Right cardiac atrium (tissue), 5 donors: ENCODE measurements at regions of chr12 and their contacts with region 1.

Region 1: GRCh38 chr12:94603434-94604365 is 46.7 kb downstream of the TMCC3 start:
- DNase-seq: peak; percentile 25 to 55 (median 50)
- ATAC-seq: peak in 1 of 2 donors; percentile 39
- H3K4me3 ChIP-seq: no peak overlapping the region
- H3K27ac ChIP-seq: no peak overlapping the region
- H3K4me1 ChIP-seq: peaks cover 2% of the 10 kb centered on the region
- H3K27me3 ChIP-seq: no peaks in the 10 kb centered on the region

Region 2: GRCh38 chr12:94753036-94753679 is 149.5 kb after region 1 on chr12:
- intact Hi-C with region 1: loop called in 1 of 4 experiments (anchors 10 kb)
- DNase-seq: peak in 2 of 3 donors; percentile 52 to 62
- ATAC-seq: peak; percentile 81
- H3K4me3 ChIP-seq: no peak overlapping the region
- H3K27ac ChIP-seq: no peak overlapping the region
- H3K4me1 ChIP-seq: no peaks in the 10 kb centered on the region
- H3K27me3 ChIP-seq: no peaks in the 10 kb centered on the region

Region 3: DNA sequence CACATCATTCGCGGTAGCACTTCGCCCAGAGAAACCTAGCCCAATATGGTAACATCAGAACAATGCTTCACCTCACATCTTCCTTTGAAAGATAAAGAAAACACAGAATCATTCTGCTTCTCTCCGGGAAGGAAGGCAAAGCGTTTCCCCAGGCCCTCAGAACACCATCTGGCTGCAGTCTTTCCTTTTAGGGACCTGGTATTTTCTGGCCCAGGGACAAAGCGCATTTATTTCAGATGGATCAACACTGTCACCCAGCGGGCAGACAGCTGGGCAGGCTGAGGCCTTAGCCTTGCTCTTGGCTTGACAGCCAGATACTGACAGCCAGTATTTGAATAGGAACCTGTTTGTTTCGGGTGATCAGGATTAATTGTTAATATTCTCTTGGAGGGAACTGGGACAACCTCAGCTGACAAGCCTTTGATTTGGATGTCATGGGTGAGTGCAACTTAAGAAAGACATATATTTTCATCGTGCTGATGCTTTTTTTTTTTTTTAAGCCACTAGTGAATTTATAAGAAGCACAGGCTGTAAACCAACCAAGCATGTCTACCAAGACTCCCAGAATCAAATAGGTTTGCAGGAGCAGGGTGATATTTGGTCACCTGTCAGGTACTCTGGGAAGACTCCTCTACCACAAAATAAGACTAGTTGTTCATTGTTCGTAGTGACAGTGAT is 732.8 kb after region 1 on chr12:
- intact Hi-C with region 1: no loop called
- DNase-seq: peak; percentile 60 to 84 (median 79)
- ATAC-seq: peak; percentile 93 to 94
- H3K4me3 ChIP-seq: no peak overlapping the region
- H3K27ac ChIP-seq: peak overlapping the region; percentile 17
- H3K4me1 ChIP-seq: no peaks in the 10 kb centered on the region
- H3K27me3 ChIP-seq: no peaks in the 10 kb centered on the region

Region 4: DNA sequence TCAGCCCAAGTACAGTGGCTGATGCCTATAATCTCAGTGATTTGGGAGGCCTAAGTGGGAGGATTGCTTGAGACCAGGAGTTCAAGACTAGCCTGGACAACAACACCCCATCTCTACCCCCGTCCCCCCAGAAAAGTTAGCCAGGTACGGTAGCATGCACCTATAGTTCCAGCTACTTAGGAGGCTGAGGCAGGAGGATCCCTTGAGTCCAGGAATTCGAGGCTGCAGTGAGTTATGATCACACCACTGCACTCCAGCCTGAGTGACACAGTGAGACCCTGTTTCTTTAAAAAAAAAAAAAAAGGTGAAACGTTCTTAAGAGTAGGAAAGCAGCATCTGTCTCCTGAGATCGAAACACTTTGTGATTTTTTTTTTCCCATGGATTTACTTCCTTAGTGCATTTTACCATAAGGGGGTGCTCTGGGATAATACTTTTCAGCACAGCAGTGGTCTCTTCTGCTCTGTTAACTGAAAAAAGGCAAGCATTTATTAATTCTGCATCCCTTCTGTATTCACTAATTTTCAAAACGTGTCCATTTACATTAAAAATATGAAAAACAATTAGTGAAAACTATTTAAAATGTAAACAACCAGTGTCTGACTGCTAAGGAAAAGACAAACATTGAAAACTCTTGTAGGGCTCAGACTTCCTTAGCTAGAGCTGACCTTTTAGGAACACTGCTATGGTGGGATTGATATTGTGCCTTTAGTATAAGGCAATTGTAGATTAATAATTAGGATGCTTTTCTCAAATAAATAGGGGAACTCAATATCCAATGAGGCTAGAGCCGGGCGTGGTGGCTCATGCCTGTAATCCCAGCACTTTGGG is 978.7 kb after region 1 on chr12:
- intact Hi-C with region 1: no loop called
- DNase-seq: no peak
- ATAC-seq: peak; percentile 54
- H3K4me3 ChIP-seq: no peak overlapping the region
- H3K27ac ChIP-seq: no peak overlapping the region
- H3K4me1 ChIP-seq: no peaks in the 10 kb centered on the region
- H3K27me3 ChIP-seq: no peaks in the 10 kb centered on the region